Uterus (tissue), 4 donors: ENCODE measurements at regions of chr5 and their contacts with region 1.

Region 1: GRCh38 chr5:167723254-167723871 is 568.1 kb upstream of the WWC1 start:
- DNase-seq: peak; percentile 31 to 36
- H3K4me3 ChIP-seq: no peak overlapping the region
- H3K27ac ChIP-seq: no peak overlapping the region
- H3K4me1 ChIP-seq: no peaks in the 10 kb centered on the region
- H3K27me3 ChIP-seq: no peaks in the 10 kb centered on the region
- CTCF ChIP-seq: peak; percentile 67 to 73 (median 70)
- POLR2A ChIP-seq: no peak

Region 2: GRCh38 chr5:167587772-167588437 is 135.5 kb before region 1 on chr5:
- intact Hi-C with region 1: no loop called
- DNase-seq: no peak
- H3K4me3 ChIP-seq: no peak overlapping the region
- H3K27ac ChIP-seq: no peak overlapping the region
- H3K4me1 ChIP-seq: no peaks in the 10 kb centered on the region
- H3K27me3 ChIP-seq: no peaks in the 10 kb centered on the region
- CTCF ChIP-seq: no peak
- POLR2A ChIP-seq: no peak

Region 3: DNA sequence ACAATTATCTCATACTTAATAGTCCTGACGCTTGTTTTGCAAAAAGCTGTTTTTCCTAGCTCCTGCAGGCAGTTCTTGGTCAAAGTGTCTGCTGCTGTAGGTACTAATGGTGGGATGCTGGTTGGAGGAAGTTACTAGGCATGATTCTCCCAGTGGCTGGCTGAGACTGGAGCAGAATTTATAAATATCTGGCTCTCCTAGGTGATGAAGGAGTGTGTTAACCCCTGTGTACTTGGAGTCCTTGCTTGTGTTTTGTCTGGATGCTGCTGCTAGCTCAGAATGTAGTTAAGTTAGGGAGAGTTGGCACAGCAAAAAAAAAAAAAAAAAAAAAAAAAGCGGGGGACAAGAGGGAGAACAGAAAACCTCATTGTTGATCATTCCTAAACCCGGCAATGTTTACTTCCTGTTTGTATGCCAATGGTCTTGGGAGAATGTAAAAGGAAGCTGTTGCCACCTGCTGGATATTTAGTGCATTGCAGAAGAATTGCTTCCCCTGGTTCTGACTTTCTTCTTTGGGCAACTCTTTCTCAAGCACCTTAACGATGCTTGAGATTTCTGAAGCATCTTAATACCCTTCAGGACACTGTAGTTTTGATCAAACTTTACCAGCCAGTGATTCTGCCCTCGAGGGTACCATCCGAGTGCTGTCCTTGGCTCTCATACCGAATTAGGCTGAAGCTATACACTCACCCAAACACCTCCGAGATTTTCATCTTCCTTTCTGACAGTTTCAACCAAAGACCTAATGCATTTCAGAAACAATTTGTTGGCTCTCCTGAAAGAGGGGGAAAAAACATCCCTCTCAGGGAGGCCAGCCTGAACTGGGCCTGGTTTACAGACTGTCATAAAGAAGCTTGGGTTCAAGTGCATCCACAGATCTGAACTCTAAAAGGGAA is 496.4 kb after region 1 on chr5:
- intact Hi-C with region 1: loop called (anchors 5 kb)
- DNase-seq: peak; percentile 19 to 31
- H3K4me3 ChIP-seq: no peak overlapping the region
- H3K27ac ChIP-seq: no peak overlapping the region
- H3K4me1 ChIP-seq: no peaks in the 10 kb centered on the region
- H3K27me3 ChIP-seq: no peaks in the 10 kb centered on the region
- CTCF ChIP-seq: peak; percentile 77 to 91 (median 83)
- POLR2A ChIP-seq: no peak